ENCODE measurements at regions of chr21 and their contacts with region 1.

Region 1: DNA sequence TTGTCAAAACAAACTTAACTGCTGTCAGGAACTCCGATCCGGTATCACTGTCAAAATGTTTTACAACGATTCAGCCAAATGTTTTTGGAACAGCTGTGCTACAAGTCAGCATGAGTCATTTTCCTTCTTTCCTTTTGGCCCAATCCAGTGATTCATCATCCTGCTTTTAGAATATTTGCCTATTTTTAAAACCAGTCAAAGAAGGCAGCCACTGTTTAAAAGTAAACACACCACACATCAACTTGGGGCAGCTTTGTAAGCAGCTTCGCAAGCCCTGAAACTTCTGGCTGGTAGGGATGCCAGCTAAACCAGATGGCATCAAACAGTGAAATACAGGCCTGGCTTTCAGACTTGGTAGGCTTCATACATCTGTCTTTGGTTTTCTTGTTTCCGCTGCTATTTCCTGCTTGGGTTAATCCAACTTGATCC is 14.9 kb downstream of the MAP3K7CL start:
- DNase-seq: peak; percentile 93
- H3K4me3 ChIP-seq: peak overlapping the region in 2 of 3 experiments; percentile 31
- H3K27ac ChIP-seq: peak overlapping the region; percentile 91
- H3K4me1 ChIP-seq: peaks cover 53% of the 10 kb centered on the region
- H3K27me3 ChIP-seq: no peaks in the 10 kb centered on the region
- CTCF ChIP-seq: no peak

Region 2: DNA sequence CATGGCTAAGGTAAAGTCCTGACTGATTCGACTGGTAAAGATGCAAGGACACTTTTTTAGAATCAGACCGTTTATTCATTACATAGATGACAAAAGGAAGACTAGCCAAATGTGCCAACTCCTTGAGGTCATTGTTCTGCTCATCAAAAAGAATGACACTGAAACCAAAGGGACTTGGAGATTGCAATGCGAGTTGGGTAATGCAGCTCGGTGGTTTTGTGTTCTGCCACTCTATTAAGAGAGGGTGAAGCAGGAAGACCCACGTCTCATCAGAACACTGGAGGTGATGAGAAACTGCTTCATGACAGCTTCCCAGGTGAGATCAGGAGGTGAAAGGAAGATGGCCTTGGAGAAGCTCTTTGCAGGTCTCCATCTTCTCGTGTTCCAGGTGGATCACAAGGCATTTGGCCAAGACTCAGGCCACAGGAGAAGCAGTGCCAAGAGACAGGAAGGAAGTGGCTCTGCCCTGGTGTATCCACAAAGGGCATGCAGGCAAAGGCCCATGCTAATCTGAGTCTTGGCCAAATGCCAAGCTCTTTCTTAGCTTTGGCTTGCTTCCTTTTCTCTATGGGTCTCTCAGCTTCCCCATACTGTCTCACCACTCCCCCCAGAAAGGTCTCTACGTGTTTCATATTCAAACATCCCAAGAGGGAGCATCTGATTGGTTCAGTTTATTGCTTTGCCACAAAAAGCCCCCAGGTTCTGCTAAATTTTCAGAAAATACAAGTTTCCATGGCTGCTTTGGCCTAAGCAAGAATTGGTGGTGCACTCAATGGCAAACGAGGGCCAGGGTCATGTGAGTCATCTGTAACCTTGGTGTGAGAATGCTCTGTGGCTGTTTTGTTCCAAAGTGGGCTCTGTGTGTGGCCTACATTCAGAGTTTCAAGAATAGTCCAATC is 66.2 kb before region 1 on chr21:
- CTCF ChIA-PET with region 1: interaction called, 15 read pairs
- dilution Hi-C with region 1: no loop called
- in situ Hi-C with region 1: no loop called
- intact Hi-C with region 1: no loop called
- DNase-seq: no peak
- H3K4me3 ChIP-seq: no peak overlapping the region
- H3K27ac ChIP-seq: no peak overlapping the region
- H3K4me1 ChIP-seq: peaks cover 19% of the 10 kb centered on the region
- H3K27me3 ChIP-seq: no peaks in the 10 kb centered on the region
- CTCF ChIP-seq: no peak

Region 3: DNA sequence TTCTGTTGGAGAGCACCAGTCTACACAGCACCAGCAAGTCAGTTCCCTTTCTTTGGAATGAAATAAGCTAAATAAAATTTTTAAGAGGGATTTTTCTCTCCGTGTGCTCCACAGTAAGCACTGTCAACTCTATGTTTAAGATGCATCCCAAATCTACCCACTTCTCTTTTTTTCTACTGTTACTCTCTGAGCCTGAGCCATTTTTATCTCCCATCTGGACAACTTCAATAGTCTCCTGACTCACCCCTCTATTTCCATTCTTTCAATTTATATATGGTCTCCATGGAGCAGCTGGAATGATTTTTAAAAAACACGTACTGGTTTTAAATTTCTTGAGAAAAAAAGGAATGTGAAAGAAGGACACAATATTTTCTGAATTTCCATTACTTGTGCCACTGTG is 47.2 kb before region 1 on chr21:
- CTCF ChIA-PET with region 1: no interaction called
- dilution Hi-C with region 1: loop called (anchors 5 kb)
- in situ Hi-C with region 1: no loop called
- intact Hi-C with region 1: no loop called
- DNase-seq: no peak
- H3K4me3 ChIP-seq: no peak overlapping the region
- H3K27ac ChIP-seq: no peak overlapping the region
- H3K4me1 ChIP-seq: no peaks in the 10 kb centered on the region
- H3K27me3 ChIP-seq: no peaks in the 10 kb centered on the region
- CTCF ChIP-seq: no peak

Region 4: DNA sequence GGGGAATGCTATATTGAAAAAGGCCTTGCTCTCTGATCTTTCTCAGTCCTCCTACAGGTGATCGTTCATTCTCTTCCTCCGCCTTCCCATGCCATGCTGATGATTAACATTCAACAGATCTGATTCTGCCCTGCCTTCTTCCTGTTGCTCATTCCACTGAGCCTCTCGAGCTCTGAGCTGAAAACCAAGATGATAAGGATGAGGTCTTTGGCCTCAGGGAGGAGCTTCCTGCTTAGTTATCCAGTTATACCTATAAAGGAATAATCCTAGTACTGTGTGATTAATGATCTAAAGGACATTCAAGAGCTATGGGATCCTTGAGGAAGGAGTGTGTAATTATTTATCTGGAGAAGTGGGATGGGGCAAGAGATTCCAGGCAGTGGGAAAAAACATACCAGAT is 40.1 kb before region 1 on chr21:
- CTCF ChIA-PET with region 1: no interaction called
- dilution Hi-C with region 1: no loop called
- in situ Hi-C with region 1: no loop called
- intact Hi-C with region 1: loop called (anchors 5 kb)
- DNase-seq: peak; percentile 80
- H3K4me3 ChIP-seq: no peak overlapping the region
- H3K27ac ChIP-seq: no peak overlapping the region
- H3K4me1 ChIP-seq: peaks cover 15% of the 10 kb centered on the region
- H3K27me3 ChIP-seq: no peaks in the 10 kb centered on the region
- CTCF ChIP-seq: peak in 1 of 2 donors; percentile 9

Region 5: GRCh38 chr21:29130270-29130969 is 14.9 kb before region 1 on chr21 and contains the start of gene MAP3K7CL:
- CTCF ChIA-PET with region 1: interaction called, 3 read pairs
- dilution Hi-C with region 1: no loop called
- in situ Hi-C with region 1: no loop called
- intact Hi-C with region 1: loop called (anchors 1 kb)
- DNase-seq: peak; percentile 94
- H3K4me3 ChIP-seq: no peak within 1 kb of the TSS
- H3K27ac ChIP-seq: peak within 1 kb of the TSS; percentile 46
- H3K4me1 ChIP-seq: peaks cover 18% of the 10 kb centered on the region
- H3K27me3 ChIP-seq: no peaks in the 10 kb centered on the region
- CTCF ChIP-seq: no peak
- total RNA-seq, gene MAP3K7CL: 6.0 to 7.7 TPM

Measured in mammary epithelial cell (primary cell).